Panc1 (cell line): ENCODE measurements at regions of chr6 and their contacts with region 1.

Region 1: GRCh38 chr6:152386131-152386530 is 251.0 kb downstream of the SYNE1 start:
- DNase-seq: no peak
- ATAC-seq: no peak
- H3K4me3 ChIP-seq: no peak overlapping the region
- H3K27ac ChIP-seq: no peak overlapping the region
- H3K4me1 ChIP-seq: no peaks in the 10 kb centered on the region
- H3K27me3 ChIP-seq: no peaks in the 10 kb centered on the region; the same call in 1 of the 2 replicates
- CTCF ChIP-seq: no peak

Region 2: DNA sequence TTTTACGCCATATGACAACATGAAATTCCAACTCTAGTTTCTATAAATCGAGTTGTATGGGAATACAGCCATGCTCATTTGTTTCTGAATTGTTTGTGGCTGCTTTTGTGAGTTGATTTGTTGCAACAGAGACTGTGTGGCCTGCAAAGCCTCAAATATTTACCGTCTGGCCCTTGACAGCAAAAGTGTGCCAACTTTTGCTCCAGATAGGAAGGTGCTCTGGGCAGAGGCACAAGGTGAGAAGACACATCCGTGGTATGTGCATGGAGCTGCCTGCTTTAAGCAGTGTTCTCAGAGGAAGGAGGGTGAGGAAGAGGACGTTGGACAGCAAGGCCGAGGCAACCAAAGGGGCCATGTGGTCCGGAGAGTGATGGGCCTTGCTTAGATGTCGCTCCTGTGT is 1959.9 kb before region 1 on chr6:
- CTCF ChIA-PET with region 1: no interaction called
- POLR2A ChIA-PET with region 1: interaction called, 11 read pairs
- in situ Hi-C with region 1: no loop called
- intact Hi-C with region 1: no loop called
- DNase-seq: no peak
- ATAC-seq: no peak
- H3K4me3 ChIP-seq: no peak overlapping the region
- H3K27ac ChIP-seq: no peak overlapping the region
- H3K4me1 ChIP-seq: no peaks in the 10 kb centered on the region
- H3K27me3 ChIP-seq: no peaks in the 10 kb centered on the region
- CTCF ChIP-seq: no peak